CD8-positive, alpha-beta T cell (primary cell): ENCODE measurements at regions of chr2 and their contacts with region 1.

Region 1: GRCh38 chr2:39124000-39124745 is 3.3 kb upstream of the SOS1 start:
- DNase-seq: peak; percentile 89 to 99 (median 96)
- ATAC-seq: peak; percentile 73
- H3K4me3 ChIP-seq: peak overlapping the region; percentile 84 to 86
- H3K4me3 Mint-ChIP-seq: peak overlapping the region; percentile 91
- H3K27ac ChIP-seq: peak overlapping the region; percentile 87 to 88
- H3K27ac Mint-ChIP-seq: peak overlapping the region; percentile 96
- H3K4me1 ChIP-seq: peaks cover 41% of the 10 kb centered on the region
- H3K4me1 Mint-ChIP-seq: peaks cover 54% of the 10 kb centered on the region
- H3K27me3 ChIP-seq: no peaks in the 10 kb centered on the region
- H3K27me3 Mint-ChIP-seq: no peaks in the 10 kb centered on the region
- CTCF ChIP-seq: peak; percentile 64

Region 2: DNA sequence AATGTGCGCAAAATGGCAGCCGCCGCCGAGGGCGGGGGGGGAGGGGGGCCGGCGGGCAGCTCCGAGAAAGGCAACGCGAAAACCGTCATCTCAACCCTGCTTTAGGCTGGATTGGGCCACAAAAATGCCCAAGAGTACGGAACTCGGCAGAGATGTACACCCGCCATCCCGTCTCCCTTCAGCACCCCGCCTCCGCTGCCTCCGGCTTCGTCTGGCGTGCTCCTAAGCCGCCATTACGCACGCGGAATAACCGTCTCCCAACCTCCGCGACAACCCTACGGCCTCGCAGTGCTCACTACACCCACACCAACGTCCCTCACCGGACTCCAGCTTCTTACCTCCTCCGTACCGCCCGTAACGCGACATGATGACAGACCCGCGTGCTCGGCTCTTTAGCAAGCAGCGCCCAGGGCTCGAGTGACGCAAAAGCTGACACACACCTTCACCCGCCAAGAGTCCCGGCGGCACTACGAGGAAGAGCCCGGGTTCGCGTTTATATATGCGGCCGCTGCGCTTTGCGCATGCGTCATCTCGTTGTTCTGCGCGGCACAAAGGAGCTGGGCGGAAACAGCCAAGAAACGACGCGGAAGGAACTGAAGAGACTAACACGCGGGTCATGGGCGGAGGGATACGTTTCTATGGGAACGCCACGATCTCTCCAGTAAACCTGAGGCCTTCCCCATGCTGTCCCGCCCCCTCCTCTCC is 373.1 kb before region 1 on chr2 and contains the start of gene SRSF7:
- CTCF ChIA-PET with region 1: no interaction called
- POLR2A ChIA-PET with region 1: interaction called, 10 read pairs
- intact Hi-C with region 1: loop called in 1 of 2 experiments (anchors 2 kb)
- DNase-seq: peak; percentile 96 to 100 (median 98)
- ATAC-seq: peak; percentile 73
- H3K4me3 ChIP-seq: peak within 1 kb of the TSS; percentile 92 to 99
- H3K4me3 Mint-ChIP-seq: peak within 1 kb of the TSS; percentile 96
- H3K27ac ChIP-seq: peak within 1 kb of the TSS; percentile 96 to 99
- H3K27ac Mint-ChIP-seq: peak within 1 kb of the TSS; percentile 98
- H3K4me1 ChIP-seq: peaks cover 55% of the 10 kb centered on the region
- H3K4me1 Mint-ChIP-seq: peaks cover 53% of the 10 kb centered on the region
- H3K27me3 ChIP-seq: no peaks in the 10 kb centered on the region
- H3K27me3 Mint-ChIP-seq: no peaks in the 10 kb centered on the region
- CTCF ChIP-seq: no peak
- total RNA-seq, gene SRSF7: 607 to 608 TPM

Region 3: DNA sequence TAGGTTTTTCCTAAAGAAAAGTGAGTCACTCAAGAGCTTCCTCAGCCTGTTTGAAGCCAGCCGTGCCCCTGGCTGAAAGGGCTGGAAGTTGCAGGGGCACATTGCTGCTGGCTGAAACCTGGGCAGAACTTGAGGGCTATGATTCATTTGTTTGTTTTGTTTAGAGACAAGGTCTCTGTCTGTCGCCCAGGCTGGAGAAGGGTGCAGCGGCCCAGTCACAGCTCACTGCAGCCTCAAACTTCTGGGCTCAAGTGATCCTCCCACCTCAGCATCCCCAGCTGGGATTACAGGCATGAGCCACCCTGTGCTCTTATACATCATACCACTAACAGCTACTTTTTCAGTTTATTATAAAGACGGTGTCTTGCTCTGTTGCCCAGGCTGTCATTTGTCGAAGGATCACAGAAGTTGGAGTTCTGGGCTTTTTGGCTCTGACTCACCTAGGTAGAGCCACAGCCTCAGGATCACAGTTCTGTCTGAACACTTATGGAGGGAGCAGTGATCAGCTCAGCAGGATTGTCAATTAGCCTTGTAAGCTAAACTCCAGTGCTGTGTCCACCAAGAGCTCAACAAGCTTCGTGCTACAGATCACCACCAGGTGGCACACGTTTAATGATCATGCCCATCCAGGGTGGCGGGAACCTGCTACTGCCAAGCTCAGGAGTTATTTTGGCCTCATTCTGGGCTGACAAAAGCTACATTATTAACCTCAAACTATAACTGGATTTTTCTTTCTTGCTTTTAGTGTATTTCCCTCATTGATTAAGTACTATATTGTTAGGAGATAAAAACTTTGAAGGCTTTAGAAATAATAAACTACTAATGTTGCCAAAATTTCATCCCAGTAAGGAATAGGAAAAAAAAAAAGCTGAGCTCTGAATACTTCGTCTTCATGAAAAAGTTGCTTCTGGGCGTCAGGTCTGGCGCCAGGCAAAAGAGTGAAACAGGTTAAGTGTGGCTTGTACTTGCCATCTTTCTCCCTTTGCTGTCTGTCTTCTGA is 176.6 kb before region 1 on chr2:
- CTCF ChIA-PET with region 1: interaction called, 3 read pairs
- POLR2A ChIA-PET with region 1: no interaction called
- intact Hi-C with region 1: loop called in 1 of 2 experiments (anchors 5 kb)
- DNase-seq: peak in 8 of 9 experiments; percentile 39 to 73 (median 56)
- ATAC-seq: no peak
- H3K4me3 ChIP-seq: no peak overlapping the region
- H3K4me3 Mint-ChIP-seq: no peak overlapping the region
- H3K27ac ChIP-seq: no peak overlapping the region
- H3K27ac Mint-ChIP-seq: no peak overlapping the region
- H3K4me1 ChIP-seq: no peaks in the 10 kb centered on the region
- H3K4me1 Mint-ChIP-seq: no peaks in the 10 kb centered on the region
- H3K27me3 ChIP-seq: no peaks in the 10 kb centered on the region
- H3K27me3 Mint-ChIP-seq: no peaks in the 10 kb centered on the region
- CTCF ChIP-seq: peak; percentile 44

Region 4: DNA sequence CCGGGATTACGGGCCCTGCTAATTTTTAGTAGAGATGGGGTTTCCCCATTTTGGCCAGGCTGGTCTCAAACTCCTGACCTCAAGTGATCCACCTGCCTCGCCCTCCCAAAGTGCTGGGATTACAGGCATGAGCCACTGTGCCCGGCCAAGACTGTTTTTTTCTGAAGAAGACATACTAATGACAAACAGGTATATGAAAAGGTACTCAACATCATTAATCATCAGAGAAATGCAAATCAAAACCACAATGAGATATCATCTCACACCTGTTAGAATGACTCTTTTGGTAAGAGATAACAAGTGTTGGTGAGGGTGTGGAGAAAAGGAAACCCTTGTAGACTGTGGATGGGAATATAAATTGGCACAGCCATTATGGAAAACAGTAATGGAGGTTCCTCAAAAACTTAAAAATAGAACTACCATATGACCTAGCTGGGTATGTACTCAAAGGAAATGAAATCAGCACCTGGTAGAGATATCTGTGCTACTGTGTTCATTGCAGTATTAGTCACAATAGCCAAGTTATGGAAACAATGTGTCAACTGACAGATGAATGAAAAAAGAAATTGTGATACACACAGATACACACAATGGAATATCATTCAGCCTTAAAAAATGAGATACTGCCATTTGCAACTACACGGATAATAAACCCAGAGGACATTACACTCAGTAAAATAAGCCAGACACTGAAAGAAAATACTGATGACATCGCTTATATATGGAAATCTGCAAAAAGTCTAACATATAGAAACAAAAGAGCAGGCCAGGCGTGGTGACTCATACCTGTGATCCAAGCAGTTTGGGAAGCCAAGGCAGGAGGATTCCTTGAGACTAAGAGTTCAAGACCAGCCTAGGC is 24.1 kb before region 1 on chr2:
- CTCF ChIA-PET with region 1: interaction called, 4 read pairs
- POLR2A ChIA-PET with region 1: interaction called, 16 read pairs
- intact Hi-C with region 1: loop called in 1 of 2 experiments (anchors 2 kb)
- DNase-seq: no peak
- ATAC-seq: peak; percentile 44
- H3K4me3 ChIP-seq: no peak overlapping the region
- H3K4me3 Mint-ChIP-seq: peak overlapping the region; percentile 10
- H3K27ac ChIP-seq: no peak overlapping the region
- H3K27ac Mint-ChIP-seq: no peak overlapping the region
- H3K4me1 ChIP-seq: peaks cover 22% of the 10 kb centered on the region
- H3K4me1 Mint-ChIP-seq: peaks cover 74% of the 10 kb centered on the region
- H3K27me3 ChIP-seq: no peaks in the 10 kb centered on the region
- H3K27me3 Mint-ChIP-seq: no peaks in the 10 kb centered on the region
- CTCF ChIP-seq: no peak

Region 5: DNA sequence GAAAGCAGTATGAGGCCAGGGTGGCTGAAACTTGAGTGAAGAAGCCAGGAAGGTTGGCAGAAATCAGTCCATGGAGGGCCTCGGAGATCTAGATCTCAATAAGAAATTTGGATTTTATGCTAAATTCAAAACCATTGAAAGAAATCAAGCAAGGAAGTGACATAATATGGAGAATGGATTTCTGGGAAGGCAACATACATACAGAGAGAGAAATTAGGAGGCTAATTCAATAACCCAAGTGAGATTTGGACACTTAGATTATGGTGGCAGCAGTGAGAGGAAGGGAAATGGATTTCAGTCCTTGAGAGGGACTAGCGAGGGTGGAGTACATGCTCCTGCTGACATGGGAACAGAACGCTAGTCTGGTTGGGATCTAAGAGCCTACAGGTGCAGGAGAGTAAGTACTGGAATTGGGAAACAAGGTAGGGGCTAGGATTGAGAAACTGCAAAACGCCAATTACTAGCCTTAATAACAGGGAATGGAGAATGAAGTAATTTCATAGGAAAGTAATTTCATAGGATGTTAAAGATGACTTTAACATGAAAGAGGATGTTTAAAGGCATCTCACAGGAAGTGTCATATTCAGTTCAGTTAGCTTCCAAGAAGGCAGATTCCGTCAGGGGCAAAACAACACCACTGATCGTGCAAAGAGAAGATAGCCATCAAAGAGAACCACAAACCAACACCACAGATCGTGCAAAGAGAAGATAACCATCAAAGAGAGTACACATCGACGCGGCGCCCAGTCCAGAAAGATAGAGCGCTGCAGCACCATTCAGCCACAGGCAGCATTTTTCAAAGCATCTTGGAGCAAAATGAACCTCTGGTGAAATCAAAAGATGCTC is 92.4 kb after region 1 on chr2:
- CTCF ChIA-PET with region 1: interaction called, 13 read pairs
- POLR2A ChIA-PET with region 1: interaction called, 34 read pairs
- intact Hi-C with region 1: loop called in 1 of 2 experiments (anchors 1 kb)
- DNase-seq: peak; percentile 50 to 94 (median 74)
- ATAC-seq: peak; percentile 90
- H3K4me3 ChIP-seq: no peak overlapping the region
- H3K4me3 Mint-ChIP-seq: peak overlapping the region; percentile 44
- H3K27ac ChIP-seq: peak overlapping the region; percentile 41 to 64
- H3K27ac Mint-ChIP-seq: peak overlapping the region; percentile 37
- H3K4me1 ChIP-seq: peaks cover 43% of the 10 kb centered on the region
- H3K4me1 Mint-ChIP-seq: peaks cover 49% of the 10 kb centered on the region
- H3K27me3 ChIP-seq: no peaks in the 10 kb centered on the region
- H3K27me3 Mint-ChIP-seq: no peaks in the 10 kb centered on the region
- CTCF ChIP-seq: no peak

Region 6: DNA sequence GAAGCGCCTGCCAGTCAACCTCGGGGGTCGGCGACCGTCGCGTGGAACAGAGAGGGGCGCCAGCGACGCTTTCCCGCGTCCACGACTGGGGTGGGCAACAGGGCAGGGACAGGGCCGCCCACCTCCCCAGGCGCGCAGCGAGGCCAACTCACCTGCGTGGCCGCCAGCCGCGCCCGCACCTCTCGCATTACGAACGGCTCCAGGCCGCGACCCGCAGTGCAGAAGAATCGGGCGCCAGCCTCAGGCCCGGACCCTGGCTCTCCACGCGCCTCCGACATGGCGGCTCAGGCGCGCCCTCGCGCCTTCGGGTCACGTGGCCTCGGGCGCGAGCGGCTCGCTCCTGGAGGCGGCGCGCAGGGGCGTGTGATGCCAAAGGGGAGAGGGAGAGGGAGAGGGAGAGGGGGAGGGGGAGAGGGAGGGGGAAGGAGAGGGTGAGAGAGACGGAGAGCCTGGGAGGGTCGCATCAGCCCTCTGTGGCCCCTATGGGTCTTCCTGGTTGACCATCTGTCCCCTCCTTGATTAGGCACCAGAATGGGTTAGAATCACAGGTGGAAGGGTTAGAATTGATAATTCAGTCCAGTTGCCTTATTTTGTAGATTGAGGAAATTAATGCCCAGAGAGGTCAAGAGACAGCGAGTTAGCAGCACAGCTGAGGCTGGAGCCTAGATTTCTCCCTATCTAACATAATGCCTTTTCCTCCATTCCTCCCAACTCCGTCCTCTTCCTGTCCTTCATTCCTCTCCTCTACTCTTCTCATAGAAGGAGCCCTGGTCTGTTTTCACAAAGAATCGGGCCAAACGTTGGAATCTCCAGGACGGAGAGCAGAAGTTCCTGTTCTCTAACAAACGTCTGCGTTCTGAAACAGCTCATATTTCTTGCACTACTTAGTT is 655.0 kb after region 1 on chr2 and contains the start of gene THUMPD2:
- CTCF ChIA-PET with region 1: no interaction called
- POLR2A ChIA-PET with region 1: no interaction called
- intact Hi-C with region 1: loop called in 1 of 2 experiments (anchors 5 kb)
- DNase-seq: peak; percentile 25 to 76 (median 52)
- ATAC-seq: peak; percentile 73
- H3K4me3 ChIP-seq: peak within 1 kb of the TSS; percentile 41 to 67
- H3K4me3 Mint-ChIP-seq: peak within 1 kb of the TSS; percentile 96
- H3K27ac ChIP-seq: peak within 1 kb of the TSS; percentile 45 to 47
- H3K27ac Mint-ChIP-seq: peak within 1 kb of the TSS; percentile 90
- H3K4me1 ChIP-seq: peaks cover 35% of the 10 kb centered on the region
- H3K4me1 Mint-ChIP-seq: peaks cover 59% of the 10 kb centered on the region
- H3K27me3 ChIP-seq: no peaks in the 10 kb centered on the region
- H3K27me3 Mint-ChIP-seq: no peaks in the 10 kb centered on the region
- CTCF ChIP-seq: no peak
- total RNA-seq, gene THUMPD2: 15.7 to 17.0 TPM